ENCODE measurements at regions of chr9 and their contacts with region 1.

Region 1: GRCh38 chr9:85508616-85509015 is 233.1 kb downstream of the AGTPBP1 start:
- DNase-seq: no peak
- ATAC-seq: no peak

Region 2: GRCh38 chr9:84652577-84653061 is 856.0 kb before region 1 on chr9:
- intact Hi-C with region 1: no loop called
- DNase-seq: no peak
- ATAC-seq: peak; percentile 59

Region 3: GRCh38 chr9:85478847-85479246 is 29.8 kb before region 1 on chr9:
- intact Hi-C with region 1: loop called (anchors 1 kb)
- DNase-seq: no peak
- ATAC-seq: peak; percentile 52

Region 4: GRCh38 chr9:85653153-85653552 is 144.5 kb after region 1 on chr9:
- intact Hi-C with region 1: no loop called
- DNase-seq: no peak
- ATAC-seq: no peak

Region 5: DNA sequence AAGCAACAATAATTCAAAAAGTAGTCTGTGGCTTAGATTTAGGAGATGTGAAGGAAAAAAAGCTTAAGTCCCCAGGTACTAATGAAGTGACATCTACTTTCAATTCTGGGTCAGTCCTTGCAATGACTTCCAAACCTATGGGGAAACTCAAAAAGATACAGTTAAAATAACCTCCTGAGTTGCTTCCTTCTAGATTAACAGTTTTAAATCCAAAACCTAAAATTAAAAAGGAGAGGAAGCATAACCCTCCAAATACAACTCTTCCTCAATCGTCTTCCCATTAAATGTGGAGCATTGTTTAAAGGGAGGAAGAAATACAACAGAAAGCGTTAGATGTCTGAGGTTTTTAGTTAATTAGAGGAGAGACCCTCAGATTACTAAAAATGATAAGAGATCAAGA is 157.5 kb after region 1 on chr9:
- intact Hi-C with region 1: no loop called
- DNase-seq: no peak
- ATAC-seq: no peak

Measured in sciatic nerve (tissue), 2 donors.